ENCODE measurements at regions of chr16 and their contacts with region 1.

Region 1: GRCh38 chr16:16861546-16861945 is 482.6 kb downstream of the NPIPA7 start:
- DNase-seq: peak; percentile 22 to 73 (median 57)
- ATAC-seq: no peak
- H3K4me3 ChIP-seq: no peak overlapping the region
- H3K4me3 Mint-ChIP-seq: no peak overlapping the region
- H3K27ac ChIP-seq: no peak overlapping the region
- H3K27ac Mint-ChIP-seq: no peak overlapping the region
- H3K4me1 ChIP-seq: no peaks in the 10 kb centered on the region
- H3K4me1 Mint-ChIP-seq: no peaks in the 10 kb centered on the region
- H3K27me3 ChIP-seq: peaks cover 0 to 2% of the 10 kb centered on the region in 2 experiments
- H3K27me3 Mint-ChIP-seq: peaks cover 10% of the 10 kb centered on the region
- CTCF ChIP-seq: peak; percentile 78

Region 2: GRCh38 chr16:16881814-16882213 is 20.3 kb after region 1 on chr16:
- CTCF ChIA-PET with region 1: interaction called, 16 read pairs
- POLR2A ChIA-PET with region 1: no interaction called
- intact Hi-C with region 1: no loop called
- DNase-seq: no peak
- ATAC-seq: no peak
- H3K4me3 ChIP-seq: no peak overlapping the region
- H3K4me3 Mint-ChIP-seq: no peak overlapping the region
- H3K27ac ChIP-seq: no peak overlapping the region
- H3K27ac Mint-ChIP-seq: no peak overlapping the region
- H3K4me1 ChIP-seq: no peaks in the 10 kb centered on the region
- H3K4me1 Mint-ChIP-seq: no peaks in the 10 kb centered on the region
- H3K27me3 ChIP-seq: no peaks in the 10 kb centered on the region
- H3K27me3 Mint-ChIP-seq: no peaks in the 10 kb centered on the region
- CTCF ChIP-seq: no peak

Region 3: GRCh38 chr16:16933861-16934260 is 72.3 kb after region 1 on chr16:
- CTCF ChIA-PET with region 1: no interaction called
- POLR2A ChIA-PET with region 1: no interaction called
- intact Hi-C with region 1: no loop called
- DNase-seq: no peak
- ATAC-seq: no peak
- H3K4me3 ChIP-seq: no peak overlapping the region
- H3K4me3 Mint-ChIP-seq: no peak overlapping the region
- H3K27ac ChIP-seq: no peak overlapping the region
- H3K27ac Mint-ChIP-seq: no peak overlapping the region
- H3K4me1 ChIP-seq: no peaks in the 10 kb centered on the region
- H3K4me1 Mint-ChIP-seq: no peaks in the 10 kb centered on the region
- H3K27me3 ChIP-seq: no peaks in the 10 kb centered on the region
- H3K27me3 Mint-ChIP-seq: peaks cover 5% of the 10 kb centered on the region
- CTCF ChIP-seq: no peak

Region 4: DNA sequence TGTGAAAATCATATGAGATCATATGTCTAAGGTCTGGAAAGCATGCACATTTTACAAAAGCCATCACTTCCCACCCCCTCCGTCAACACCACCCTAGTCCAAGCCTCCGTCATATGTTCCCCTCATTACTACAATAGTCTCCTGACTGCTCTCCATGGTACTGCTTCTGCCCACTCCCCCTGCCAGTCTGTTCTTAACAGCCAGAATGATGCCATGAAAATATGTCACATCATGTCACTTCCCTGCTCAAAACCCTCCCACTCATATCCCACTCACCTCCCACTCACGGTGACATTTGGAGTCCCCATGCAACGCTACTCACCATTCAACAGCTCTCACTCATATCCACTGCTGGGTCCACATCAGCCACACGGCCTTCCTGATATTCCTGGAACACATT is 176.9 kb after region 1 on chr16:
- CTCF ChIA-PET with region 1: no interaction called
- POLR2A ChIA-PET with region 1: no interaction called
- intact Hi-C with region 1: no loop called
- DNase-seq: no peak
- ATAC-seq: no peak
- H3K4me3 ChIP-seq: no peak overlapping the region
- H3K4me3 Mint-ChIP-seq: no peak overlapping the region
- H3K27ac ChIP-seq: no peak overlapping the region
- H3K27ac Mint-ChIP-seq: no peak overlapping the region
- H3K4me1 ChIP-seq: peaks cover 13% of the 10 kb centered on the region
- H3K4me1 Mint-ChIP-seq: no peaks in the 10 kb centered on the region
- H3K27me3 ChIP-seq: no peaks in the 10 kb centered on the region
- H3K27me3 Mint-ChIP-seq: no peaks in the 10 kb centered on the region
- CTCF ChIP-seq: no peak

Region 5: DNA sequence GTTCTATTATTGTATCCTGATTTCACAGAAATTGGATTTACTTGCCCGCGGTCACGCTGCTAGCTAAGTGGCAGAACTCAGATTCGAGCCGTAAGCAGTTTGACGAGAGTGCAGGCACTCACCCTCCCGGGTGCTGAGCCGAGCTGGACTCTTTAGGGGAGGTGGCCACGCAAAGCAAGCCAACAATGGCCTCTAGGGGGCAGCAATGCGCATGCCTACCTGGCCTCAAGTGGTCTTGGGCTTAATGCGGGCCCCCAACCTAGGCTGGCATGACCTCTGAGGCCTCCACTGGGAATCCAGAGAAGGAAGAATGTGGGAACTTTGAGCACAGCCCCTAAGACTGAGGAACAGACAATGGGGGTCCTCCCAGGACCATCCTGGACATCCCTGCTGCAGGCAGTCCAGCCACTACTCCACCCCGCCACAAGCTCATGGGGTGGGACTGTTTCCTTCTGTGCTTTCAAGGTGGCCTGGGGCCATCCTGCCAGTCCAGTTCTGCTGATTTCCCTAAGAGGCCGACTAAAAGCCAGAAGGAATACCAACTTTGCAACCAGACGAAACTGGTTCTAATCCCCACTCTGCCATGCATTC is 332.7 kb after region 1 on chr16:
- CTCF ChIA-PET with region 1: interaction called, 3 read pairs
- POLR2A ChIA-PET with region 1: no interaction called
- intact Hi-C with region 1: loop called in 1 of 2 experiments (anchors 5 kb)
- DNase-seq: peak; percentile 19 to 78 (median 67)
- ATAC-seq: no peak
- H3K4me3 ChIP-seq: no peak overlapping the region
- H3K4me3 Mint-ChIP-seq: no peak overlapping the region
- H3K27ac ChIP-seq: no peak overlapping the region
- H3K27ac Mint-ChIP-seq: no peak overlapping the region
- H3K4me1 ChIP-seq: no peaks in the 10 kb centered on the region
- H3K4me1 Mint-ChIP-seq: no peaks in the 10 kb centered on the region
- H3K27me3 ChIP-seq: no peaks in the 10 kb centered on the region
- H3K27me3 Mint-ChIP-seq: no peaks in the 10 kb centered on the region
- CTCF ChIP-seq: peak; percentile 61

Region 6: GRCh38 chr16:17211797-17212196 is 350.3 kb after region 1 on chr16:
- CTCF ChIA-PET with region 1: interaction called, 4 read pairs
- POLR2A ChIA-PET with region 1: no interaction called
- intact Hi-C with region 1: loop called in 1 of 2 experiments (anchors 10 kb)
- DNase-seq: peak in 7 of 9 experiments; percentile 4 to 64 (median 41)
- ATAC-seq: peak; percentile 56
- H3K4me3 ChIP-seq: no peak overlapping the region
- H3K4me3 Mint-ChIP-seq: no peak overlapping the region
- H3K27ac ChIP-seq: no peak overlapping the region
- H3K27ac Mint-ChIP-seq: no peak overlapping the region
- H3K4me1 ChIP-seq: peaks cover 22% of the 10 kb centered on the region
- H3K4me1 Mint-ChIP-seq: peaks cover 19% of the 10 kb centered on the region
- H3K27me3 ChIP-seq: no peaks in the 10 kb centered on the region
- H3K27me3 Mint-ChIP-seq: no peaks in the 10 kb centered on the region
- CTCF ChIP-seq: peak; percentile 48

Region 7: GRCh38 chr16:17416461-17417311 is 555.1 kb after region 1 on chr16:
- CTCF ChIA-PET with region 1: interaction called, 3 read pairs
- POLR2A ChIA-PET with region 1: no interaction called
- intact Hi-C with region 1: loop called in 1 of 2 experiments (anchors 5 kb)
- DNase-seq: peak; percentile 21 to 78 (median 55)
- ATAC-seq: peak; percentile 94
- H3K4me3 ChIP-seq: peak overlapping the region; percentile 41 to 49
- H3K4me3 Mint-ChIP-seq: peak overlapping the region; percentile 87
- H3K27ac ChIP-seq: peak overlapping the region; percentile 41 to 60
- H3K27ac Mint-ChIP-seq: peak overlapping the region; percentile 92
- H3K4me1 ChIP-seq: peaks cover 16% of the 10 kb centered on the region
- H3K4me1 Mint-ChIP-seq: peaks cover 42% of the 10 kb centered on the region
- H3K27me3 ChIP-seq: no peaks in the 10 kb centered on the region
- H3K27me3 Mint-ChIP-seq: no peaks in the 10 kb centered on the region
- CTCF ChIP-seq: peak; percentile 43

Region 8: DNA sequence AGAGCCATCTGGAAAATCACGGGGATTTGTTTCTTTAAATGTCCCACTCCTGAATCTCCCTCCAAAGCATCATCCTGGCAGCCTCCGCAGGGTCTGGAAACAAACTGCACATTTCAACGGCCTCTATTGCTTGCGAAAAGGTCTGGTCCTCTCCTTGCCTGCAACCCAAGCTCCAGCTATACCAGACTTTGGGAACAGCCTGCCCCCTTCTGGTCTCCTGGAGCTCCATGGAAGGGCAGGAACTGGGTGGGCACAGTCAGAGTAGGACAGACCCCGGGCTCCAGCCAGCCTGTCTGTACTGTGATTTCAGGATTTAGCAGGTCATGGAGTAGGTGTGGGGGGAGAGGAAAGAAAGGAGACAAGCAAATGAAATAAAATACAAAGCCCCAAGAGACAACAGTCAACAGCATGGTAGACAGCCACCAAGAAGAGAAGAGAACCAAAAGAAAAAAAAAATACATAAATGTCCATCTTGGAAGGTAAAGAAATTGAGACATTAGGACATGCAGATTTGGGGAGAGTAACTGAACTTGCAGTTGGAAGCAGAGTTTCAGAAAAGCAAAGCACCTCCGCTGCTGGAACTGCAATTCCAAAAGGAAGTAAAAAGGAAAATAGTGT is 606.5 kb after region 1 on chr16:
- CTCF ChIA-PET with region 1: interaction called, 3 read pairs
- POLR2A ChIA-PET with region 1: no interaction called
- intact Hi-C with region 1: loop called (anchors 5 to 10 kb)
- DNase-seq: peak in 6 of 9 experiments; percentile 41 to 69 (median 54)
- ATAC-seq: no peak
- H3K4me3 ChIP-seq: no peak overlapping the region
- H3K4me3 Mint-ChIP-seq: peak overlapping the region; percentile 93
- H3K27ac ChIP-seq: no peak overlapping the region
- H3K27ac Mint-ChIP-seq: no peak overlapping the region
- H3K4me1 ChIP-seq: peaks cover 32% of the 10 kb centered on the region
- H3K4me1 Mint-ChIP-seq: peaks cover 45% of the 10 kb centered on the region
- H3K27me3 ChIP-seq: no peaks in the 10 kb centered on the region
- H3K27me3 Mint-ChIP-seq: no peaks in the 10 kb centered on the region
- CTCF ChIP-seq: peak; percentile 25

Region 9: GRCh38 chr16:17578921-17579874 is 717.7 kb after region 1 on chr16:
- CTCF ChIA-PET with region 1: interaction called, 35 read pairs
- POLR2A ChIA-PET with region 1: no interaction called
- intact Hi-C with region 1: loop called in 1 of 2 experiments (anchors 5 kb)
- DNase-seq: peak; percentile 18 to 80 (median 57)
- ATAC-seq: peak; percentile 71
- H3K4me3 ChIP-seq: no peak overlapping the region
- H3K4me3 Mint-ChIP-seq: no peak overlapping the region
- H3K27ac ChIP-seq: no peak overlapping the region
- H3K27ac Mint-ChIP-seq: no peak overlapping the region
- H3K4me1 ChIP-seq: no peaks in the 10 kb centered on the region
- H3K4me1 Mint-ChIP-seq: peaks cover 3% of the 10 kb centered on the region
- H3K27me3 ChIP-seq: no peaks in the 10 kb centered on the region
- H3K27me3 Mint-ChIP-seq: peaks cover 6% of the 10 kb centered on the region
- CTCF ChIP-seq: peak; percentile 84